Lower lobe of right lung (tissue), 2 donors: ENCODE measurements at regions of chr5 and their contacts with region 1.

Region 1: GRCh38 chr5:80672140-80672736 is 17.5 kb upstream of the DHFR start:
- DNase-seq: peak; percentile 64
- ATAC-seq: peak; percentile 64 to 71
- H3K4me3 ChIP-seq: no peak overlapping the region
- H3K27ac ChIP-seq: no peak overlapping the region
- H3K4me1 ChIP-seq: no peaks in the 10 kb centered on the region
- H3K27me3 ChIP-seq: no peaks in the 10 kb centered on the region
- CTCF ChIP-seq: peak; percentile 87

Region 2: GRCh38 chr5:80487829-80488721 is 184.2 kb before region 1 on chr5 and contains the start of gene FAM151B:
- intact Hi-C with region 1: loop called (anchors 10 kb)
- DNase-seq: peak; percentile 95
- ATAC-seq: peak; percentile 98 to 99
- H3K4me3 ChIP-seq: peak within 1 kb of the TSS; percentile 77
- H3K27ac ChIP-seq: peak within 1 kb of the TSS; percentile 87
- H3K4me1 ChIP-seq: peaks cover 24% of the 10 kb centered on the region
- H3K27me3 ChIP-seq: no peaks in the 10 kb centered on the region
- CTCF ChIP-seq: peak; percentile 17
- total RNA-seq, gene FAM151B: 4.1 TPM